Activated CD4-positive, alpha-beta memory T cell treated with anti-CD3 and anti-CD28 coated beads for 36 hours (primary cell): ENCODE measurements at regions of chrX and their contacts with region 1.

Region 1: GRCh38 chrX:124211312-124211942 is 121.0 kb upstream of the TEX13D start:
- DNase-seq: peak; percentile 15
- H3K4me3 Mint-ChIP-seq: no peak overlapping the region
- H3K27ac Mint-ChIP-seq: no peak overlapping the region
- H3K4me1 Mint-ChIP-seq: peaks cover 33% of the 10 kb centered on the region
- H3K27me3 Mint-ChIP-seq: no peaks in the 10 kb centered on the region

Region 2: DNA sequence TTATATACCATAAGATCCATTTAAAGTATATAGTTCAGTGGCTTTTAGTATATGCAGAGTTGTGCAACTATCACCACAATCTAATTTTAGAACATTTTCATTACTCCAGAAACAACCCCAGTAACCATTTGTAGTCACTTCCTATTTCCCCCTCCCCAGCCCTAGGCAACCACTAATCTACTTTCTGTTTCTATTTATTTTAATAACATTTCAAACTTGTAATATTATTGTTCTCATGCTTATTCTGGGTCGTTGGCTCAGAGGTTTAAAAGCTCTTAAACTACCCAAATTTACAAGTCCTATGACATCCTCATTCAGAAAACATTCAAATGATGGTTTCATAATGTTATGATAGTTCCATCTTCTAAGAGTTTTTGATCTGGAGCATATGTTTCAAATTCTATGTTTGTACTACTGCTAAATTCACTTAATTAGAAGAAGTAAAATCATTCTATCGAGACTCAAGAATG is 333.1 kb before region 1 on chrX:
- CTCF ChIA-PET with region 1: no interaction called
- POLR2A ChIA-PET with region 1: no interaction called
- intact Hi-C with region 1: loop called (anchors 10 kb)
- DNase-seq: no peak
- H3K4me3 Mint-ChIP-seq: no peak overlapping the region
- H3K27ac Mint-ChIP-seq: peak overlapping the region; percentile 58
- H3K4me1 Mint-ChIP-seq: peaks cover 22% of the 10 kb centered on the region
- H3K27me3 Mint-ChIP-seq: no peaks in the 10 kb centered on the region

Region 3: DNA sequence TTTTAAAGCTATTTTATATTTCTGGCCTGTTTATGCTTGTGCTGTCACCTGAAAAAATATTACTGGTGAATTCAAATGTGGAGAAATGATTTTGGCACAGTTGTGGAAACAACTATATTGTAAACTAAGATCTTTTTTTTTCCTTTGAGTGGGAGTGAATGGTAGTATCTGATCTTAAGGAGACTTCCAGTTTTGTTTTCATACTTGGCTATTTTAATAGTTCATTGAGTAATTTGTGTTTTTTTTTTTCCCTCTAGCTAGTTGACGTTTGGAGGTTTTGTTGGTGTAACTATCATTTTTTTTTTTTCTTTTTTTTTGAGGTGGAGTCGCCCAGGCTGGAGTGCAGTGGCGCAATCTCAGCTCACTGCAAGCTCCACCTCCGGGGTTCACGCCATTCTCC is 239.4 kb before region 1 on chrX:
- CTCF ChIA-PET with region 1: no interaction called
- POLR2A ChIA-PET with region 1: no interaction called
- intact Hi-C with region 1: no loop called
- DNase-seq: no peak
- H3K4me3 Mint-ChIP-seq: no peak overlapping the region
- H3K27ac Mint-ChIP-seq: peak overlapping the region; percentile 9
- H3K4me1 Mint-ChIP-seq: peaks cover 42% of the 10 kb centered on the region
- H3K27me3 Mint-ChIP-seq: no peaks in the 10 kb centered on the region

Region 4: GRCh38 chrX:124098089-124098488 is 113.3 kb before region 1 on chrX:
- CTCF ChIA-PET with region 1: no interaction called
- POLR2A ChIA-PET with region 1: no interaction called
- intact Hi-C with region 1: loop called (anchors 5 kb)
- DNase-seq: no peak
- H3K4me3 Mint-ChIP-seq: no peak overlapping the region
- H3K27ac Mint-ChIP-seq: no peak overlapping the region
- H3K4me1 Mint-ChIP-seq: peaks cover 2% of the 10 kb centered on the region
- H3K27me3 Mint-ChIP-seq: no peaks in the 10 kb centered on the region

Region 5: DNA sequence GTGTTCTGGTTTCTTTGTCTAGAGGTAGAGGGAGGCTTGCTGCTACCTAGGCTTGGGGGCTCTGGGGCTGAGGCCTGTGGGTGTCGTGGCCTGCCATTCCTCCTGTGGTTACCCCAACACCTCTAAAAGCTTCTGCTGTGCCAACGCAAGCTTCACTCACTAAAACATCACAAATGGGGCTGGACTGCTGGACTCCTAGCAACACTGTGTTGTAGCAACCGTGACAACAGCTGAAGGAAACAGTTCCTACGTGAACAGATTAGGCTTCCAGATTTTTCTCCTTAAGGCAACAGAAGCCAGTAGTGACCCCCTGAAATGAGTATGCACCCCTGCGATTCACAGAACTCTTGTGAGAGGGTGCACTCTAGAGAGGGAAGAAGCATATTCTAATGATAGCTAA is 17.2 kb before region 1 on chrX:
- CTCF ChIA-PET with region 1: no interaction called
- POLR2A ChIA-PET with region 1: no interaction called
- intact Hi-C with region 1: no loop called
- DNase-seq: no peak
- H3K4me3 Mint-ChIP-seq: no peak overlapping the region
- H3K27ac Mint-ChIP-seq: no peak overlapping the region
- H3K4me1 Mint-ChIP-seq: no peaks in the 10 kb centered on the region
- H3K27me3 Mint-ChIP-seq: no peaks in the 10 kb centered on the region

Region 6: GRCh38 chrX:124289443-124289842 is 78.0 kb after region 1 on chrX:
- CTCF ChIA-PET with region 1: no interaction called
- POLR2A ChIA-PET with region 1: no interaction called
- intact Hi-C with region 1: no loop called
- DNase-seq: no peak
- H3K4me3 Mint-ChIP-seq: no peak overlapping the region
- H3K27ac Mint-ChIP-seq: no peak overlapping the region
- H3K4me1 Mint-ChIP-seq: peaks cover 2% of the 10 kb centered on the region
- H3K27me3 Mint-ChIP-seq: no peaks in the 10 kb centered on the region

Region 7: GRCh38 chrX:124300405-124300804 is 89.0 kb after region 1 on chrX:
- CTCF ChIA-PET with region 1: no interaction called
- POLR2A ChIA-PET with region 1: no interaction called
- intact Hi-C with region 1: loop called (anchors 1 kb)
- DNase-seq: no peak
- H3K4me3 Mint-ChIP-seq: no peak overlapping the region
- H3K27ac Mint-ChIP-seq: peak overlapping the region; percentile 58
- H3K4me1 Mint-ChIP-seq: peaks cover 32% of the 10 kb centered on the region
- H3K27me3 Mint-ChIP-seq: no peaks in the 10 kb centered on the region

Region 8: GRCh38 chrX:124518888-124519287 is 307.5 kb after region 1 on chrX:
- CTCF ChIA-PET with region 1: no interaction called
- POLR2A ChIA-PET with region 1: no interaction called
- intact Hi-C with region 1: no loop called
- DNase-seq: no peak
- H3K4me3 Mint-ChIP-seq: no peak overlapping the region
- H3K27ac Mint-ChIP-seq: no peak overlapping the region
- H3K4me1 Mint-ChIP-seq: no peaks in the 10 kb centered on the region
- H3K27me3 Mint-ChIP-seq: no peaks in the 10 kb centered on the region

Region 9: GRCh38 chrX:124736553-124737240 is 525.3 kb after region 1 on chrX:
- CTCF ChIA-PET with region 1: no interaction called
- POLR2A ChIA-PET with region 1: no interaction called
- intact Hi-C with region 1: loop called (anchors 10 kb)
- DNase-seq: peak; percentile 63
- H3K4me3 Mint-ChIP-seq: peak overlapping the region; percentile 56
- H3K27ac Mint-ChIP-seq: peak overlapping the region; percentile 16
- H3K4me1 Mint-ChIP-seq: peaks cover 24% of the 10 kb centered on the region
- H3K27me3 Mint-ChIP-seq: no peaks in the 10 kb centered on the region

Region 10: DNA sequence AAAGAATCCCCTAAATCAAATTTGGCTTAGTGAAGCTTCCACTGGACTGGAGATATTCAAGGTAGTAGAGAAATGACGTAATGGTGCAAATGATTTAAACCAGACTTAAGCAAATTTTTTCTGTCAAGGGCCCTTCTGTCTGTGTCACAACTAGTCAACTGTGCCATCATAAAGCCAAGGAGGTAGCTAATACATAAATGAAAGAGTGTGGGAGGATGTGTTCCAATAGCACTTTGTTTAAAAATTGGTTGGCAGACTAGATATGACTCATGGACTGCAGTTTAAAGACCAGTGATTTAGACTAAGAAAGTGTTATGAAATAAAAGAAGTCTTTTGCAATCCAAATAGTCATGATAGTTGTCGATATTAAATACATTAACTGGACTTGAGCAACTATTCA is 1083.9 kb after region 1 on chrX:
- CTCF ChIA-PET with region 1: no interaction called
- POLR2A ChIA-PET with region 1: no interaction called
- intact Hi-C with region 1: loop called (anchors 10 kb)
- DNase-seq: no peak
- H3K4me3 Mint-ChIP-seq: no peak overlapping the region
- H3K27ac Mint-ChIP-seq: peak overlapping the region; percentile 71
- H3K4me1 Mint-ChIP-seq: peaks cover 22% of the 10 kb centered on the region
- H3K27me3 Mint-ChIP-seq: no peaks in the 10 kb centered on the region